Heart left ventricle (tissue), 16 donors: ENCODE measurements at regions of chr16 and their contacts with region 1.

Region 1: DNA sequence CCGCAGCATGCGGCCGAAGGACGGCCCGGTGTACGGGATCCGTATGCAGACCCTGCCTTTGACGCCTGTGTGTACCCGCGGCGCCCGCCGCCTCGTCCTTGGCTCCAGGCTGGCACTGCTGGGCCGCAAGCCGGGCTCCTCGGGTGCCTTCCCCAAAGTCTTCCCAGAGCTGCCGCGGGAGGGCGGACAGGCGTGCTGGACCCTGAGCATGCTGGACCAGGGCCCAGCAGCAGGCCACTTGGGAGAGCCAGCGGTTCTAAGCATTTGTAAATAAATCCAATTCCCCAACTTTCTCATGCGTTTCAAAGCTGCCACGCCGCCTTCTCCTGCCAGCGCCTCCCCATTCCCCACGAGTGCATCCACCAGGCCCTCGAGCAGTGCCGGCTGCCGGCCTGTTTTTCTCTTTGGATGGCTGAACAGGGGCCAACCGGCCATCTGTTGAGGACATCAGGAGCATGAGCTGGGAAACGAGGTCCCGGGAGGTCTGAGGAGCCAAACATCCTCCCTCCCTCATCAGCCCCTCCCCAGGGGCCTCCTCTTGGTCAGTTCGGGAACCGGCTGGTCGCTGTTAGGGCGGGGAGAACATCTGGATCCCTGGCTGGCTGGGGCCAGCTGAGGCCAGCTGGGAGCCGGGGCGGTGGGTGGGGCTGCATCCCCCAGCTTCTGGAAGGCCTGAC is 20.5 kb upstream of the PABPN1L start:
- DNase-seq: peak; percentile 92 to 97 (median 94)
- ATAC-seq: peak; percentile 81 to 92 (median 88)
- H3K4me3 ChIP-seq: peak overlapping the region in 1 of 12 donors; percentile 3
- H3K27ac ChIP-seq: peak overlapping the region; percentile 31 to 94 (median 81)
- H3K4me1 ChIP-seq: peaks cover 0 to 39% (median 28%) of the 10 kb centered on the region in 12 donors
- H3K27me3 ChIP-seq: no peaks in the 10 kb centered on the region
- CTCF ChIP-seq: peak in 11 of 12 donors; percentile 12 to 59 (median 38)
- POLR2A ChIP-seq: no peak

Region 2: GRCh38 chr16:88856828-88857733 is 29.9 kb before region 1 on chr16 and contains the starts of genes GALNS and TRAPPC2L:
- intact Hi-C with region 1: loop called in 2 of 10 experiments (anchors 1 to 2 kb)
- DNase-seq: peak; percentile 98 to 100 (median 99)
- ATAC-seq: peak; percentile 93 to 98 (median 98)
- H3K4me3 ChIP-seq: peak within 1 kb of the TSS; percentile 63 to 98 (median 90)
- H3K27ac ChIP-seq: peak within 1 kb of the TSS in 11 of 12 donors; percentile 53 to 86 (median 81)
- H3K4me1 ChIP-seq: peaks cover 0 to 52% (median 21%) of the 10 kb centered on the region in 12 donors
- H3K27me3 ChIP-seq: no peaks in the 10 kb centered on the region
- CTCF ChIP-seq: no peak
- POLR2A ChIP-seq: peak in 1 of 2 donors; percentile 88
- total RNA-seq, gene GALNS: 10.7 to 22.7 (median 13.3) TPM
- total RNA-seq, gene TRAPPC2L: 20.3 to 65.7 (median 44.2) TPM

Region 3: GRCh38 chr16:88900662-88901052 is 13.7 kb after region 1 on chr16:
- intact Hi-C with region 1: no loop called
- DNase-seq: no peak
- ATAC-seq: no peak
- H3K4me3 ChIP-seq: no peak overlapping the region
- H3K27ac ChIP-seq: no peak overlapping the region
- H3K4me1 ChIP-seq: peaks cover 0 to 23% (median 0%) of the 10 kb centered on the region in 12 donors
- H3K27me3 ChIP-seq: no peaks in the 10 kb centered on the region
- CTCF ChIP-seq: no peak
- POLR2A ChIP-seq: no peak

Region 4: DNA sequence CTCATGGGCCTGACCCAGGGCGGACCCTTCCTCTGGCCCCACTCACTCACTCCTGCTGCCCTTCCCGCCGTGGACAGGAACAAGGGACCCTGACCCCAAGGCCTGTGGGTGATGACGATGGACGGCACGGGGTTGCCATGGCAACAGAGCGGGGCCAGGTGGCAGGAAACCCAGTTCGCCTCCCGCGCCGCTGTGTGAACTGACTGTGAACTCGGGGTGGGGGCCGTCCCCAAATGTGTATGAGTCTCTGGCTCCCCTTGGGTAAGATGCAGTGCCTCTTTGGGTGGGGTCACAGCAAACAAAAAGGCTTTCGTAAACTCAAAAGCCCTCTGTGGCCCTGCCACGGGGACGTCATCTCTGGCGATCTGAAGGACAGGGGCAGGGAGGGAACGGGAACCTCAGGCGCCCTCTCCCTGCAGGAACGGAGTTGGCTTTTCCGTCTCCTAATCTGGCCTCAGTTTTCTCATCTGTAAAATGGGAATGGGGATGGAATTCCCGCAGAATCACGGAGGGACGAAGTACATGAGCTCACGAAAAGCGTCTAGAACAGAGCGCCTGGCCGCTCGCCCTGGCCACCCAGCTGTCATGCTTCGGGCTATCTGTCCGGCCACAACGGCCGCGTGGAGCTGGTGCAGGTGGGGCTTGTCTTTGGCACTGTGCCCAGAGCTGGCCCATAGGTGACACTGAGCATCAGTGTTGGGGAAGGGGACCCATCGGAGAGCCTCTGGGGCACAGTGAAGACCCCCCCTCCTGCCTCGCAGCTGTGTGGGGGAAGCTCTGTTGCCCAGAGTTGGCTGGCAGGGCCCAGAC is 24.4 kb after region 1 on chr16:
- intact Hi-C with region 1: loop called in 3 of 10 experiments (anchors 1 to 2 kb)
- DNase-seq: no peak
- ATAC-seq: peak in 1 of 4 donors; percentile 9
- H3K4me3 ChIP-seq: no peak overlapping the region
- H3K27ac ChIP-seq: peak overlapping the region in 7 of 12 donors; percentile 2 to 79 (median 48)
- H3K4me1 ChIP-seq: peaks cover 0 to 60% (median 19%) of the 10 kb centered on the region in 12 donors
- H3K27me3 ChIP-seq: no peaks in the 10 kb centered on the region
- CTCF ChIP-seq: no peak
- POLR2A ChIP-seq: no peak

Region 5: DNA sequence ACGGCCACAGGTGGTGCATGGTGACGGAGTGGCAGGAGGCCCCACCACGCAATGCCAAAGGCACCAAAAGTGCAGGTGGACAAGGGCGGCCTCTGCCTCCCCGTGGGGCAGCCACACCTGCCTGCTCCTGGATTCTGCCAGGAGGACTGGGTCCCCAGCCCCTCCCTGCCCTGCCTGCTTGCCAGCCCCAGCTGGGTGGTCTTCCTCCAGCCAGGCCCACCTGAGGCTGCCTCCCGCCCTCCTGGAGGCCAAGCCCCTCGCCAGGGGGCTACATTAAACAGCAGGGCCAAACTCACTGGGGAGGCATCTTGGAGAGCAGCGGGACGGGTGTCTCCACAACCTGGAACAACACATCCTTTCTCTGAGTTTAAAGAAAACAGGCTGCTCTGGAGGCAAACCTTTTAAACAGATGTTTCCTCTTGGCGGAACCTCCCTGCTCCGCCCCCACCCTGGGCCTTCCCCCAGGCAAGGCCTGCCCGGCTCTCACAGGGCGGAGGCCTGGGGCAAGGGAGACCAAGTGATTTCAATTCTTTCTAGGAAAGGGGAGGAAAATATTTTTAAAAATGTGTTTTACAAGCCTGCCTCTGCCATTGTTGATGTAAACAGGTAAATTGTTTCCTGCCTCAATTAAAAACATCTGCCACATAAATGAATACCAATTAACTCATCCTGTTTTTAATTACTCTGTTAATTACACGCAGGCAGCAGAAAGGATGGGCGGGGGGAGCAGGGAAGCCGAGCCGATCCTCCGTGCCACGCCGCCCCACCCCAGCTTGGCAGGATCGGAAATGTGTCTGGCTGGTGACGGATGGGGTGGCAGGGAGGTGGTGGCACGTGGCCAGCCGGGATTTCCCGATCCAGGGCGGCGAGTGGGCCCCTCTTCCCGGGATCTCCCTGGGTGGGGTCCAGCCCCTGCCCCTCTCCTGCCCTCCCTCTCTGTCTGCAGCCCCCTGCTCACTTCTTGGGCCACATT is 33.9 kb after region 1 on chr16:
- intact Hi-C with region 1: loop called in 5 of 10 experiments (anchors 1 to 5 kb)
- DNase-seq: peak; percentile 85 to 89 (median 87)
- ATAC-seq: peak; percentile 66 to 92 (median 80)
- H3K4me3 ChIP-seq: peak overlapping the region in 9 of 12 donors; percentile 2 to 43 (median 34)
- H3K27ac ChIP-seq: peak overlapping the region; percentile 6 to 90 (median 78)
- H3K4me1 ChIP-seq: peaks cover 10 to 73% (median 51%) of the 10 kb centered on the region in 12 donors
- H3K27me3 ChIP-seq: no peaks in the 10 kb centered on the region
- CTCF ChIP-seq: no peak
- POLR2A ChIP-seq: no peak

Region 6: GRCh38 chr16:88936556-88937205 is 49.7 kb after region 1 on chr16:
- intact Hi-C with region 1: loop called in 7 of 10 experiments (anchors 1 to 5 kb)
- DNase-seq: peak in 4 of 5 donors; percentile 55 to 82 (median 66)
- ATAC-seq: peak in 2 of 4 donors; percentile 12 to 27
- H3K4me3 ChIP-seq: peak overlapping the region in 10 of 12 donors; percentile 12 to 40 (median 30)
- H3K27ac ChIP-seq: peak overlapping the region; percentile 1 to 96 (median 86)
- H3K4me1 ChIP-seq: peaks cover 12 to 57% (median 45%) of the 10 kb centered on the region in 12 donors
- H3K27me3 ChIP-seq: peaks cover 0 to 28% (median 7%) of the 10 kb centered on the region in 9 donors
- CTCF ChIP-seq: no peak
- POLR2A ChIP-seq: no peak